ENCODE measurements at regions of chr3 and their contacts with region 1.

Region 1: GRCh38 chr3:38521391-38521987 is 25.3 kb downstream of the EXOG start:
- DNase-seq: no peak
- H3K4me3 ChIP-seq: no peak overlapping the region
- H3K27me3 ChIP-seq: no peaks in the 10 kb centered on the region
- CTCF ChIP-seq: peak; percentile 86

Region 2: GRCh38 chr3:37892927-37893600 is 628.4 kb before region 1 on chr3:
- CTCF ChIA-PET with region 1: no interaction called
- POLR2A ChIA-PET with region 1: no interaction called
- DNase-seq: no peak
- H3K4me3 ChIP-seq: no peak overlapping the region
- H3K27me3 ChIP-seq: no peaks in the 10 kb centered on the region
- CTCF ChIP-seq: no peak

Region 3: GRCh38 chr3:38460377-38461270 is 60.9 kb before region 1 on chr3:
- CTCF ChIA-PET with region 1: no interaction called
- POLR2A ChIA-PET with region 1: no interaction called
- DNase-seq: no peak
- H3K4me3 ChIP-seq: no peak overlapping the region
- H3K27me3 ChIP-seq: no peaks in the 10 kb centered on the region
- CTCF ChIP-seq: no peak

Region 4: GRCh38 chr3:38507120-38507519 is 14.4 kb before region 1 on chr3:
- CTCF ChIA-PET with region 1: interaction called, 20 read pairs
- POLR2A ChIA-PET with region 1: no interaction called
- DNase-seq: no peak
- H3K4me3 ChIP-seq: no peak overlapping the region
- H3K27me3 ChIP-seq: no peaks in the 10 kb centered on the region
- CTCF ChIP-seq: no peak

Region 5: DNA sequence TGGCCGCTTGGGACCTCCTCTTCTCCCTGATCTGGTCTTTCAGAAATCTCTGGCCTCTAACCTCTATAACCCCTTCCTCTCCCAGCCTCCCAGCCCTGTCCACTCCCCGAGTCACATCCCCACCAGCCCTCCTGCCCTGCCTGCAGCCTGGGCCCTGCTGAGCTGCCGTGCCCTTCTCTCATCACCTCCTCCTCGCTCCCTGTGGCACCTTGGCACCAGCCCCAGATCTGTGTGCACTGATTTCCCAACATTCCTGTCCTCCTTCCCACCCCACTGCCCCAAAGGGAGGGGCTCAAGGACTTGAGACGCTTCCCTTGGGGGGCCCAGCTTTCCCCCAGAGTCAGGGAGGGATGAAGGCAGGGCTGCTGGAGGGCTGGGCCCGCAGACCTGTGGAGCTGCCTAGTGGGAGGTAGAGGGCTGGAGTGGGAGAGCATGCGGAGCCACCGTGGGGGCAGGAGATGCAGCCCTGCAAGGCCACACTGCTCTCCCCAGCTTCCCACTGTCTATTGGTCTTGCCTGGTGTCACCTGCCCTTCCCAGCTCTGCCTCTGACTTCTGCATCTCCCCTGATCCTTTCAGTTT is 17.4 kb after region 1 on chr3:
- CTCF ChIA-PET with region 1: interaction called, 23 read pairs
- POLR2A ChIA-PET with region 1: no interaction called
- DNase-seq: no peak
- H3K4me3 ChIP-seq: no peak overlapping the region
- H3K27me3 ChIP-seq: no peaks in the 10 kb centered on the region
- CTCF ChIP-seq: no peak

Region 6: GRCh38 chr3:38662544-38662943 is 141.1 kb after region 1 on chr3:
- CTCF ChIA-PET with region 1: interaction called, 121 read pairs
- POLR2A ChIA-PET with region 1: no interaction called
- DNase-seq: no peak
- H3K4me3 ChIP-seq: no peak overlapping the region
- H3K27me3 ChIP-seq: peaks cover 17% of the 10 kb centered on the region
- CTCF ChIP-seq: peak; percentile 48

Region 7: GRCh38 chr3:38837358-38837757 is 315.9 kb after region 1 on chr3:
- CTCF ChIA-PET with region 1: interaction called, 88 read pairs
- POLR2A ChIA-PET with region 1: no interaction called
- DNase-seq: no peak
- H3K4me3 ChIP-seq: no peak overlapping the region
- H3K27me3 ChIP-seq: no peaks in the 10 kb centered on the region; the same call in 1 of the 2 replicates
- CTCF ChIP-seq: no peak

Region 8: GRCh38 chr3:38843898-38844297 is 322.4 kb after region 1 on chr3:
- CTCF ChIA-PET with region 1: interaction called, 88 read pairs
- POLR2A ChIA-PET with region 1: no interaction called
- DNase-seq: no peak
- H3K4me3 ChIP-seq: no peak overlapping the region
- H3K27me3 ChIP-seq: peaks cover 6% of the 10 kb centered on the region
- CTCF ChIP-seq: peak; percentile 58

Region 9: GRCh38 chr3:39279745-39280517 is 758.4 kb after region 1 on chr3 and contains the start of gene CX3CR1:
- CTCF ChIA-PET with region 1: no interaction called
- POLR2A ChIA-PET with region 1: interaction called, 24 read pairs
- DNase-seq: no peak
- H3K4me3 ChIP-seq: no peak within 1 kb of the TSS
- H3K27me3 ChIP-seq: peaks cover 2% of the 10 kb centered on the region; the same call in 1 of the 2 replicates
- CTCF ChIP-seq: no peak
- polyA plus RNA-seq, gene CX3CR1: 0.45 and 0.51 TPM in 2 replicates